HepG2 (cell line): ENCODE measurements at regions of chr11 and their contacts with region 1.

Region 1: GRCh38 chr11:129286813-129287212 is 88.8 kb upstream of the BARX2 start:
- DNase-seq: no peak
- ATAC-seq: peak; percentile 39; the same call in 1 of the 3 replicates
- H3K4me3 ChIP-seq: 0 out of 6 replicates have a peak overlapping the region, but pooled peaks of 1 of the 3 experiments have one; percentile 5
- H3K27ac ChIP-seq: no peak overlapping the region
- H3K4me1 ChIP-seq: peaks cover 45% of the 10 kb centered on the region
- H3K27me3 ChIP-seq: peaks cover 0 to 21% of the 10 kb centered on the region in 2 experiments; a peak in 4 of 5 replicates
- CTCF ChIP-seq: no peak
- EP300 ChIP-seq: no peak
- POLR2A ChIP-seq: no peak
- RAD21 ChIP-seq: no peak

Region 2: GRCh38 chr11:129323896-129324512 is 37.2 kb after region 1 on chr11:
- CTCF ChIA-PET with region 1: no interaction called
- POLR2A ChIA-PET with region 1: no interaction called
- in situ Hi-C with region 1: loop called (anchors 5 kb)
- intact Hi-C with region 1: no loop called
- DNase-seq: peak; percentile 37
- ATAC-seq: peak; percentile 58
- H3K4me3 ChIP-seq: peak overlapping the region; percentile 54 to 61 (median 55)
- H3K27ac ChIP-seq: no peak overlapping the region
- H3K4me1 ChIP-seq: peaks cover 65% of the 10 kb centered on the region
- H3K27me3 ChIP-seq: no peaks in the 10 kb centered on the region; a peak in 1 of 5 replicates
- CTCF ChIP-seq: no peak
- EP300 ChIP-seq: no peak
- POLR2A ChIP-seq: no peak
- RAD21 ChIP-seq: no peak